Activated CD4-positive, alpha-beta T cell treated with anti-CD3 and anti-CD28 coated beads for 36 hours (primary cell): ENCODE measurements at regions of chr18 and their contacts with region 1.

Region 1: GRCh38 chr18:48777026-48777743 is 173.6 kb downstream of the SMAD7 start:
- DNase-seq: peak; percentile 84
- ATAC-seq: peak; percentile 97
- H3K4me3 Mint-ChIP-seq: no peak overlapping the region
- H3K27ac Mint-ChIP-seq: no peak overlapping the region
- H3K4me1 Mint-ChIP-seq: peaks cover 6% of the 10 kb centered on the region
- H3K27me3 Mint-ChIP-seq: peaks cover 3% of the 10 kb centered on the region

Region 2: GRCh38 chr18:48215876-48216623 is 561.1 kb before region 1 on chr18:
- CTCF ChIA-PET with region 1: no interaction called
- POLR2A ChIA-PET with region 1: no interaction called
- intact Hi-C with region 1: no loop called
- DNase-seq: no peak
- ATAC-seq: no peak
- H3K4me3 Mint-ChIP-seq: no peak overlapping the region
- H3K27ac Mint-ChIP-seq: no peak overlapping the region
- H3K4me1 Mint-ChIP-seq: no peaks in the 10 kb centered on the region
- H3K27me3 Mint-ChIP-seq: no peaks in the 10 kb centered on the region

Region 3: DNA sequence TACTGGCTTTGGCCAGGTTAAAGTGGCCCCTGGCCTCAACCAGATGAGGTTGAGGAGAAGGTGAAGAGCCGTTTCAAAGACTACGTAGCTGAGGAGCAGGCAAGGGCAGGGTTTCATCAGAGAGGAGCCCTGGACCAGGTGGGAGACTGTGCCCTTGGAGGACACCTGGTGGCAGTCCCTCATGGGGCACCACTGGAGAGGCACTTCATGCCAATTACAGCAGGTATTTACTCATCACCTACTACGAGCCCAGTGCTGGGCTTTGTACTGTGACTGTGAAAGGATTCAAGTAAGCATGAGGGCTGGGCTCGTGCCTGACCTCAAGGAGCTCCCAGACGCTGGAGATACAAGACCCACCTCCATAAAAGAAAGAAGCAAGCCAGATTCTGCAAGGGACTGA is 136.0 kb after region 1 on chr18:
- CTCF ChIA-PET with region 1: no interaction called
- POLR2A ChIA-PET with region 1: no interaction called
- intact Hi-C with region 1: loop called (anchors 1 to 2 kb)
- DNase-seq: peak; percentile 69
- ATAC-seq: peak; percentile 90
- H3K4me3 Mint-ChIP-seq: no peak overlapping the region
- H3K27ac Mint-ChIP-seq: no peak overlapping the region
- H3K4me1 Mint-ChIP-seq: peaks cover 12% of the 10 kb centered on the region
- H3K27me3 Mint-ChIP-seq: no peaks in the 10 kb centered on the region

Region 4: DNA sequence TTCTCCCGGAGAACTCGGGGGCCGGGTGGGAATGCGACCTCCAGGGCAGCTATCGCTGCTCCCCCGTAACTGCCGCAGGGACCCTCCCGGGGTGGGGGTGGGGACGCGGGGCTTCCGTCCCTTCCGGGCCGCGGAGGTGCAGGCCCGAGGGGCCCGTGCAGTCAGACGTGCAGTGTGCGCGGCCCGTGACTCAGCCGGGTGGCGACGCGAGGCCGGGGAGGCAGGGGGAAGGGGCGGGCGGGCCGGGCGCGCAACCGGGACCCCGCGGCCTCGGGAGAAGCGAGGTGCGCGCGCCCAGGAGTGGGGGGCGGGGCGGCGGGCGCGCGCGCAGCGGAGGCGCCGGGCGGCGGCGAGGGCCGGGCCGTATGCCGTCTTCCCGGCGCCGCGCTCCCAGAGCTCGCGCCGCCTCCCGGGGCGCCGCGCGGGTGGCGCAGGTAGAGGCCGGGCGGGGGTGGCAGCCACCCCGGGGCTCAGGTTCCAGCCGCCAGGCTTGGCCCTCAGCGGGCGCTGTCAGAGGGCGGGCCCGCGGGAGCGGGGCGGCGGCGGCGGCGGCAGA is 198.5 kb after region 1 on chr18:
- CTCF ChIA-PET with region 1: no interaction called
- POLR2A ChIA-PET with region 1: no interaction called
- intact Hi-C with region 1: loop called in 1 of 2 experiments (anchors 5 kb)
- DNase-seq: peak; percentile 82
- ATAC-seq: peak; percentile 87
- H3K4me3 Mint-ChIP-seq: peak overlapping the region; percentile 66
- H3K27ac Mint-ChIP-seq: no peak overlapping the region
- H3K4me1 Mint-ChIP-seq: peaks cover 11% of the 10 kb centered on the region
- H3K27me3 Mint-ChIP-seq: peaks cover 12% of the 10 kb centered on the region

Region 5: GRCh38 chr18:49041435-49042245 is 264.5 kb after region 1 on chr18:
- CTCF ChIA-PET with region 1: interaction called, 11 read pairs
- POLR2A ChIA-PET with region 1: no interaction called
- intact Hi-C with region 1: loop called in 1 of 2 experiments (anchors 2 kb)
- DNase-seq: peak; percentile 56
- ATAC-seq: peak; percentile 51
- H3K4me3 Mint-ChIP-seq: no peak overlapping the region
- H3K27ac Mint-ChIP-seq: no peak overlapping the region
- H3K4me1 Mint-ChIP-seq: peaks cover 10% of the 10 kb centered on the region
- H3K27me3 Mint-ChIP-seq: no peaks in the 10 kb centered on the region

Region 6: GRCh38 chr18:49193897-49194296 is 416.7 kb after region 1 on chr18:
- CTCF ChIA-PET with region 1: no interaction called
- POLR2A ChIA-PET with region 1: no interaction called
- intact Hi-C with region 1: no loop called
- DNase-seq: no peak
- ATAC-seq: no peak
- H3K4me3 Mint-ChIP-seq: no peak overlapping the region
- H3K27ac Mint-ChIP-seq: no peak overlapping the region
- H3K4me1 Mint-ChIP-seq: no peaks in the 10 kb centered on the region
- H3K27me3 Mint-ChIP-seq: no peaks in the 10 kb centered on the region

Region 7: GRCh38 chr18:49238433-49239042 is 461.4 kb after region 1 on chr18:
- CTCF ChIA-PET with region 1: no interaction called
- POLR2A ChIA-PET with region 1: no interaction called
- intact Hi-C with region 1: loop called in 1 of 2 experiments (anchors 2 kb)
- DNase-seq: peak; percentile 17
- ATAC-seq: no peak
- H3K4me3 Mint-ChIP-seq: no peak overlapping the region
- H3K27ac Mint-ChIP-seq: no peak overlapping the region
- H3K4me1 Mint-ChIP-seq: no peaks in the 10 kb centered on the region
- H3K27me3 Mint-ChIP-seq: no peaks in the 10 kb centered on the region